Calu3 (cell line): ENCODE measurements at regions of chr1 and their contacts with region 1.

Region 1: DNA sequence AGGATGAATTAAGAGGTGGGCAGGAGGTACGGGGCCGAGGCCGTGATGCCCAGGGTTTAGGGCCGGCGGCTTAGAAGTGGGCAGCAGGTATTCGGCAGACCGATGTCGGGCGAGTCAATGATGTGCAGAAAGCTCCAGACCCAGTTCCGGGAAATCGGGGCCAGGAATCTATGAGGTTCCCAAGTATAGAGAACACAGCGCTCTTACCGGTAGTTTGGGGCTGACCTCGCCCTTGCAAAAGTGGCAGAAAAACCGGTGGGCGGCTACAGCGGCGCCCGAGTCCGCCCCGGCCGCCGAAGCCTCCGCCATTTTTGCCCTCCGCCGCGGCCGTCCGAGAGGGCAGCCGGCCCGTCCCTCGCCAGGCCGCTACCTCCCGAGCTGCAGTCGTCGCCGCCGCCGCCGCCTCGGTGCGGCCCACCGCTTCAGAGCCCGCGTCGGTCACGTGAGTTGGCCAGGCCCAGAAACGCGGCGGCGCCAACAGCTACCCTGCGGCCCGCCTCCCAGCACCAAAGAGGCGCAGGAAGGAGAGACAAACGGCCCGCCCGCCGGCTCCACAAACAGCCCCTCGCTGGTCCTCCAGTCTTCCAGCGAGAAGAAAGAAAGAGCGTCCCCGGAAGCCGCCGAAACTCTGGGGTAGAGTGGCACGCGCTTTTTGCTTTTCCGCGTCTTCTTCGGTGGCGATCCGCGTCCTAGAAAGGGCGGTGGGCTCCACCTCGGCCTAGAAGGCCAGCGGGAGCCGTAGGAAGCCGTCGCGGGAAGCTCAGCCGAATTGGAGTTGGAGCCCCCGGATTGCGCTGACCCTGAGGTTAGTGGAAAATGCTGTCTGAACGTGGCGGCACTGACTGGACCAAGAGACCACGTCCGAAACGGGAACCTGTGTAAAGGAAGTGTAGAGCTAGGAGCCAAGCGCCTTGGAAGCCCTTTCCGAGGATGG is at the starts of genes POLR3C and RNF115:
- DNase-seq: peak; percentile 85
- H3K4me3 Mint-ChIP-seq: peak within 1 kb of the TSS; percentile 89
- H3K27ac Mint-ChIP-seq: peak within 1 kb of the TSS; percentile 76
- H3K4me1 Mint-ChIP-seq: no peaks in the 10 kb centered on the region
- H3K27me3 Mint-ChIP-seq: no peaks in the 10 kb centered on the region
- CTCF ChIP-seq: no peak
- total RNA-seq, gene POLR3C: 29.3 and 33.0 TPM in 2 replicates
- total RNA-seq, gene RNF115: 9.5 and 9.9 TPM in 2 replicates

Region 2: DNA sequence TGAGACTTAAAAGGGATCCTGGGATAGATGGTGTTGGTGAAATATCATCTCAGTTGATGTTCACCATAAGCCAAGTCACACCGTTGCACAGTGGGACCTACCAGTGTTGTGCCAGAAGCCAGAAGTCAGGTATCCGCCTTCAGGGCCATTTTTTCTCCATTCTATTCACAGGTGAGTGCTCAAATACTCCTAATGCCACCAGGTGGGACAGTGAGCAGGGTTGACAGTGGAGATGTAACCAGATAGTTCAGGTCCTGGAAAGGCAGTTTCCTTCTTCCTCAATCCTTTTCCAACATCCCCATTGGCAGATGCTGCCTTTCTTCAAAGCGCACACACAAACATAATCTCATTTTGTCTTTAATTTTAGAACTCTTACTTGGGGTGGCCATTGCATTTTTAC is 92.9 kb before region 1 on chr1:
- CTCF ChIA-PET with region 1: no interaction called
- intact Hi-C with region 1: loop called (anchors 10 kb)
- DNase-seq: peak; percentile 19
- H3K4me3 Mint-ChIP-seq: no peak overlapping the region
- H3K27ac Mint-ChIP-seq: no peak overlapping the region
- H3K4me1 Mint-ChIP-seq: peaks cover 23% of the 10 kb centered on the region
- H3K27me3 Mint-ChIP-seq: peaks cover 13% of the 10 kb centered on the region
- CTCF ChIP-seq: no peak

Region 3: DNA sequence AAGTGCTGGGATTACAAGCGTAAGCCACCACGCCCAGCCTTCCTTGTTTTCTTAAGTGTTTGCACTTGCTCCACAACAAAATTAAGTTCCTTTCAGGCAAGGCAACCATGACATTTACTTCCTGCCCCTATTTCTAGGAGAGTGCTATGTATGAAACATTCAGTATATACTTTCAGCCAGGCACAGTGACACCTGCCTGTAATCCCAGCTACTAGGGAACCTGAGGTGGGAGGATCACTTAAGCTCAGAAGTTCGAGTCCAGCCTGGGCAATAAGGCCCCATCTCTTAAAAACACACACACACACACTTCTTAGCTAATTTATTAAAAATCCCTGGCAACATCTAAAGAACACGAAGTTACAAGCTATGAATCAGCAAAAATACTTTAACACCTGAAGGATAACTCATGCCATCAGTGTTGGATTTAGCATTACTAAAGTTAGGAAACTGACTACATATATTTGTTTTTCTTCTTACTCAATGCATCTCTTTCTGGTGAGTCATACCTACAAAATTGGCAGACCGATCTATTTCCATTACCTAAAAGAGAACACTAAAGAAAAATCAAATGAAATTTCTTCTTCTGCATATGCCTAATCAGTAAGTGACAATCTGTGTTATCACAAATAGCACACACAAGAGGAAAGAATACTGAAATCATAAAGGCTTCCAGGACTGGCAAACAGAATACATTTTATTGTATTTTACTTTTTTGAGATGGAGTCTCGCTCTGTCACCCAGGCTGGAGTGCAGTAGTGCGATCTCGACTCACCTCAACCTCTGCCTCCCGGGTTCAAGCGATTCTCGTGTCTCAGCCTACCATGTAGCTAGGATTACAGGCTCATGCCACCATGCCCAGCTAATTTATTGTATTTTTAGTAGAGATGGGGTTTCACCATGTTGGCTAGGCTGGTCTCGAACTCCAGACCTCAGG is 41.4 kb before region 1 on chr1:
- CTCF ChIA-PET with region 1: no interaction called
- intact Hi-C with region 1: loop called (anchors 5 kb)
- DNase-seq: peak; percentile 39
- H3K4me3 Mint-ChIP-seq: no peak overlapping the region
- H3K27ac Mint-ChIP-seq: peak overlapping the region; percentile 85
- H3K4me1 Mint-ChIP-seq: peaks cover 45% of the 10 kb centered on the region
- H3K27me3 Mint-ChIP-seq: no peaks in the 10 kb centered on the region
- CTCF ChIP-seq: no peak

Region 4: DNA sequence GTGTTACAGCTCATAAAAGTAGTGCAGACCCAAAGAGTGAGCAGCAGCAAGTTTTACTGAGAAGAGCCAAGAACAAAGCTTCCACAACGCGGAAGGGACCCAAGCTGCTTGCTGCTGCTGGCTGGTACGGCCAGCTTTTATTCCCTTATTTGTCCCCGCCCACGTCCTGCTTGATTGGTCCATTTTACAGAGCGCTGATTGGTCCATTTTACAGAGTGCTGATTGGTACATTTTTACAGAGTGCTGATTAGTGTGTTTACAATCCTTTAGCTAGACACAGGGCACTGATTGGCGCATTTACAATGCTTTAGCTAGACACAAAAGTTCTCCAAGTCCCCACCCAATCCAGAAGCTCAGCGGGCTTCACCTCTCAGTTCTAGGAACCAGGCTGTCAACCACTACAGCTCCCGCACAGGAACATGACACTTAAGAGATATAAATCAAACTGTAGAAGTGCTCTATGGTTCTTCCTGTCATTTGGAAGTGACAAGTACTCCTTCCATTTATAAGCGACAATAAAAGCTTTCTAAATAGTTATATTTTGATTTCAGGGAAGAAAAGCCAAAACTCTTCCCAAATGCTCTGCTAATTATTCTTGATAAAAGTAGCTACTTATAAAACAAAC is 28.5 kb before region 1 on chr1:
- CTCF ChIA-PET with region 1: no interaction called
- intact Hi-C with region 1: no loop called
- DNase-seq: no peak
- H3K4me3 Mint-ChIP-seq: no peak overlapping the region
- H3K27ac Mint-ChIP-seq: no peak overlapping the region
- H3K4me1 Mint-ChIP-seq: peaks cover 8% of the 10 kb centered on the region
- H3K27me3 Mint-ChIP-seq: no peaks in the 10 kb centered on the region
- CTCF ChIP-seq: no peak

Region 5: GRCh38 chr1:146007506-146008133 is 183.8 kb after region 1 on chr1:
- CTCF ChIA-PET with region 1: no interaction called
- intact Hi-C with region 1: no loop called
- DNase-seq: no peak
- H3K4me3 Mint-ChIP-seq: no peak overlapping the region
- H3K27ac Mint-ChIP-seq: no peak overlapping the region
- H3K4me1 Mint-ChIP-seq: no peaks in the 10 kb centered on the region
- H3K27me3 Mint-ChIP-seq: no peaks in the 10 kb centered on the region
- CTCF ChIP-seq: no peak